OCI-LY7 (cell line): ENCODE measurements at regions of chr9 and their contacts with region 1.

Region 1: DNA sequence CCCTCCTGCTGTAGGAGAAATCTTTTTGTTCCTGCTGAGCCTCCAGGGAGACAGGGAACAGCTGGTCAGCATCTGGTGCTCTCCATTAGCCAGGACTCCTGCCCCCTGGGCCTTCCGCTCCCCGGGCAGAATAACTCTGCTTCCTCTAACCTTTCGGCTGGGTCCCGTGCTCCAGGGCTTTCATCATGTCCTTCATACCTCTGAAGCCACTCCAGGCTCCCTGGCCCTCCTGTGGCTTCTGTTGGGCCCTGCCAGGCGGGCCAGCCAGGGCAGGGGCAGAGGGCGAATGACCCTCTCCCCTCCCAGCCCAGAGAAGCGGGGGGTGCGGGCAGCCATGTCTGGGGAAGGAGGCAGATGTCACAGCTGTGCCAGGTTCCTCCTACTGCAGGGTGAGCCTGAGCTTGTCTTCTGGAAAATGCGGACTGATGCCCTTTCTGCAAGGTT is 81.7 kb upstream of the LMX1B start:
- DNase-seq: no peak
- H3K4me3 ChIP-seq: peak overlapping the region; percentile 65
- H3K27ac ChIP-seq: peak overlapping the region; percentile 87
- H3K4me1 ChIP-seq: peaks cover 62% of the 10 kb centered on the region
- CTCF ChIP-seq: no peak

Region 2: GRCh38 chr9:126146254-126147145 is 385.5 kb before region 1 on chr9:
- CTCF ChIA-PET with region 1: no interaction called
- POLR2A ChIA-PET with region 1: no interaction called
- intact Hi-C with region 1: no loop called
- DNase-seq: peak; percentile 4
- H3K4me3 ChIP-seq: no peak overlapping the region
- H3K27ac ChIP-seq: no peak overlapping the region
- H3K4me1 ChIP-seq: no peaks in the 10 kb centered on the region
- CTCF ChIP-seq: peak; percentile 61

Region 3: GRCh38 chr9:126516936-126517832 is 14.9 kb before region 1 on chr9:
- CTCF ChIA-PET with region 1: no interaction called
- POLR2A ChIA-PET with region 1: interaction called, 17 read pairs
- intact Hi-C with region 1: no loop called
- DNase-seq: peak; percentile 24
- H3K4me3 ChIP-seq: peak overlapping the region; percentile 56
- H3K27ac ChIP-seq: no peak overlapping the region
- H3K4me1 ChIP-seq: peaks cover 22% of the 10 kb centered on the region
- CTCF ChIP-seq: no peak

Region 4: DNA sequence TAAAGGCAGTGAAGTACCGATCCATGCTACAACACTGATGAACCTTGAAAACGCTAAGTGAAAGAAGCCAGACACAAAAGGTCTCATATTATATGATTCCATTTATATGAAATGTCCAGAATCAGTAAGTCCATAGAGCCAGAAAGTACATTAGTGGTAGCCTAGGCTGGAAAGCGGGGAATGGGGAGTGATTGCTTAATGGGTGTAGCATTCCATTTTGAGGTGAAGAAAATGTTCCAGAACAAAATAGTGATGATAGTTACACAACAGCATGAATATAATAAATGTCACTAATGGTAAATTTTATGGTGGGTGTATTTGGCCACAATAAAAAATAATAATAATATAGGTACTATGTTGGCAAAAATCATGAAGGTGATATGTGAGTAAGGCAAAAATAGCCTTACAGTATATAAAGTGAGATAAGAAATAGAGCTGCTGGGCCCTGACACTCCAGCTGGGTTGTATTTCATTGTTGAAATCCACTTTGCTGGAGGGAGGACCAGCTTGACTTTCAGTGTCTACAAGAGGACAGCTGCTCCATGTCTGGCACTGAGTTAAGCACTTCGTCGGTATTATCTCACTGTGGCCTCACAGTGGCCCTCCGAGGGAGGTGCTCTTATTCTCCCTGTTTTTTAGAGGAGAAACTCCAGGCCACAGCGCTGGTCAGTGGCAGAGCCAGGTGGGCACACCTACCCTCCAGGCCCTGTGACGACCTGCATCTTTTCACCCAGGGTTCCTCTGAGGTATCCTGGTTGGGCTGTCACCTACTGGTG is 612.8 kb after region 1 on chr9:
- CTCF ChIA-PET with region 1: no interaction called
- POLR2A ChIA-PET with region 1: no interaction called
- intact Hi-C with region 1: no loop called
- DNase-seq: no peak
- H3K4me3 ChIP-seq: no peak overlapping the region
- H3K27ac ChIP-seq: no peak overlapping the region
- H3K4me1 ChIP-seq: no peaks in the 10 kb centered on the region
- CTCF ChIP-seq: no peak